Left cardiac atrium (tissue), 4 donors: ENCODE measurements at regions of chr12 and their contacts with region 1.

Region 1: DNA sequence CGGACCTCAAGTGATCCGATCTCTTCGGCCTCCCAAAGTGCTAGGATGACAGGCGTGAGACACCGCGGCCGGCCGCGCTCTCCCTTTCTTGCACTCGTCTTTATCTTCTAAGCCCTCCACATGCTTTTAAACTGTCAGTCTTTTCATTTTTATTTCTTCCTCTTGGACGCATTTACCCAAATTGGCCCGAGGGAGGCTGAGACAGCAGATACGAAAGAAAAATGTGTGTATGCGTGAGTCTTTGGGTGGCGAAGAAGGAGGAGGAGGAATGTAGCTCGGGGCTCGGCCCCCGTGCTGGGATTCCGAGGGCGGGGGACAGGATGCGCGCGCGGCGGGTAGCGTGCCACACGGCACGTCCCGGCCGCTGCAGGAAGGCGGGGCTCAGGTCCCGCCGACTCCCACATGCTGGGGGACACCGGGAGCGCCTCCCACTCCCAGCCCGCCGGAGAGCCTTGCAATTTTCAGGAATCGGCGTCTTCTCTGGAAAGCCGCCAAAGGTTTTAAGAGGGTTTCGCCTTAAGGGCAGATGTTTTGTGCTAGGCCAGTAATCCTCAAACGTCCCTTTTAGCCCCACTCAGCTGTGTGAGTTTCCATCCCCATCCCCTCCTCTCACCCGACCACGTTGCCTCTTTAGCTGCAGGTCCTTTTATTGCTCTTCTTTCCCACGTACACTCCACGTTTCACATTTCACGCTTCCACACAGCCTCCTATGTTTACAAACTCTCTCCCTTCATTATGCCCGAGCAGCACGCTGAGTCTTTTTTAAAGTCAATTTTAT is 34.7 kb upstream of the SLC2A3 start:
- DNase-seq: peak; percentile 93
- ATAC-seq: peak; percentile 99

Region 2: DNA sequence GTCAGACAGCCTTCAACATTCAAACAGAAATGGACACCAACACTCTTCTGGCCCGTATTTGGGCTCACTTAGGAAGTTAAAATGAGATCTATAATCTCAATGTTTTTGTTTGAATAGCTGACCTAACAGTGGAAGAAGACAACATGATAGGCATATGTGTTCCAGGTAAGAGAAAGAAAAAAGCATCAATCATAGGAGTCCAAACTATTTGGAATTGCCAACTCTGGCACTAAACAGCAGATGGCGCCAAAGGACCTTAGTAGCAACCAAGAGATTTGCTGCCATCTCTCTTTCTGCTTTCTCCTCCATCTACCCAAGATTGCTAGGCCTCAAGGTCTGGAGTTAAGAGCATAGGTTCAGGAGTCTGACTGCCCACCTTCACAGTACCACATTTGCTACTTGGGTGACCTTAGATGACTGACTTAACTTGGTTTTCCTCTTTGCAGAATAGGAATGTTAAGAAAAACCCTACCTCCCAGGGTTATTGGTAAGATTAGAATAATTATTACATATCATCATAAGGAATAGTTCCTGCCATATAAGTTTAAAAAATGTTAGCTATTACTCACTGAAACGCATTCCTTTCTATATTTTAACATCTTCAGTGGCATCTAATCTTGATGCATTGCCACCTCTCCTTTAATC is 750.9 kb before region 1 on chr12:
- intact Hi-C with region 1: no loop called
- DNase-seq: peak; percentile 69
- ATAC-seq: peak; percentile 55 to 58

Region 3: GRCh38 chr12:7869127-7869526 is 101.5 kb before region 1 on chr12:
- intact Hi-C with region 1: no loop called
- DNase-seq: no peak
- ATAC-seq: no peak

Region 4: GRCh38 chr12:7933255-7933729 is 37.4 kb before region 1 on chr12:
- intact Hi-C with region 1: loop called in 1 of 2 experiments (anchors 5 kb)
- DNase-seq: peak; percentile 80
- ATAC-seq: peak; percentile 88 to 90